ENCODE measurements at regions of chr16 and their contacts with region 1.

Region 1: DNA sequence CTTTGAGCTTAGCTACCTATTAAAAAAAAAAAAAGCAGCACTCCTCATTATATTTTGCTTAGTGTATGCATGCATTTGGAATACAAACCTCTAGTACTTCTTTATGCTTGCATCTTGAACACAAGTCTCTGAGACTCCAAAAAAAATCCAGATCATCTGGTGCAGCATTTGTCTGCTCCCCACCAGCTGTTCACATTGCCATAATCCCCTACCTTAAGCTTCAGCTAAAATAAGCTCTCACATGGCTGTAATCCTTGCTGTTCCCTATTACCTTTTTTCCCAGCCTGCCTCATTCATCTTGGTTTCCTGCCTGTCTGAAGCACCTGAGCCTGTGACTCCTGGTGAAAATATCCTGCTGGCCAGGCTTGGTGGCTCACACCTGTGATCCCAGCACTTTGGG is 7.5 kb upstream of the NFATC2IP start:
- DNase-seq: no peak
- H3K4me3 ChIP-seq: no peak overlapping the region
- H3K27ac ChIP-seq: no peak overlapping the region
- H3K4me1 ChIP-seq: peaks cover 4% of the 10 kb centered on the region
- H3K27me3 ChIP-seq: no peaks in the 10 kb centered on the region
- CTCF ChIP-seq: no peak
- POLR2A ChIP-seq: no peak

Region 2: GRCh38 chr16:28573738-28574718 is 369.3 kb before region 1 on chr16:
- CTCF ChIA-PET with region 1: no interaction called
- POLR2A ChIA-PET with region 1: no interaction called
- dilution Hi-C with region 1: no loop called
- intact Hi-C with region 1: no loop called
- DNase-seq: no peak
- H3K4me3 ChIP-seq: no peak overlapping the region
- H3K27ac ChIP-seq: no peak overlapping the region
- H3K4me1 ChIP-seq: no peaks in the 10 kb centered on the region
- H3K27me3 ChIP-seq: no peaks in the 10 kb centered on the region
- CTCF ChIP-seq: no peak
- POLR2A ChIP-seq: no peak

Region 3: GRCh38 chr16:28823872-28824716 is 119.2 kb before region 1 on chr16:
- CTCF ChIA-PET with region 1: interaction called, 4 read pairs
- POLR2A ChIA-PET with region 1: no interaction called
- dilution Hi-C with region 1: no loop called
- intact Hi-C with region 1: loop called (anchors 1 kb)
- DNase-seq: peak; percentile 99
- H3K4me3 ChIP-seq: peak overlapping the region; percentile 38 to 93 (median 77)
- H3K27ac ChIP-seq: peak overlapping the region; percentile 67
- H3K4me1 ChIP-seq: peaks cover 16% of the 10 kb centered on the region
- H3K27me3 ChIP-seq: no peaks in the 10 kb centered on the region
- CTCF ChIP-seq: peak in 1 of 2 donors; percentile 28
- POLR2A ChIP-seq: peak; percentile 75

Region 4: GRCh38 chr16:28846080-28846932 is 97.0 kb before region 1 on chr16 and contains the start of gene TUFM:
- CTCF ChIA-PET with region 1: interaction called, 20 read pairs
- POLR2A ChIA-PET with region 1: no interaction called
- dilution Hi-C with region 1: no loop called
- intact Hi-C with region 1: loop called (anchors 1 kb)
- DNase-seq: peak; percentile 99
- H3K4me3 ChIP-seq: peak within 1 kb of the TSS; percentile 54 to 84 (median 67)
- H3K27ac ChIP-seq: peak within 1 kb of the TSS; percentile 42
- H3K4me1 ChIP-seq: peaks cover 13% of the 10 kb centered on the region
- H3K27me3 ChIP-seq: no peaks in the 10 kb centered on the region
- CTCF ChIP-seq: peak; percentile 70 to 83
- POLR2A ChIP-seq: peak; percentile 87
- total RNA-seq, gene TUFM: 186 and 190 TPM in 2 replicates

Region 5: GRCh38 chr16:28863929-28864793 is 79.1 kb before region 1 on chr16:
- CTCF ChIA-PET with region 1: interaction called, 15 read pairs
- POLR2A ChIA-PET with region 1: no interaction called
- dilution Hi-C with region 1: no loop called
- intact Hi-C with region 1: loop called (anchors 1 kb)
- DNase-seq: peak; percentile 52
- H3K4me3 ChIP-seq: peak overlapping the region; percentile 46 to 90 (median 83)
- H3K27ac ChIP-seq: peak overlapping the region; percentile 96
- H3K4me1 ChIP-seq: peaks cover 8% of the 10 kb centered on the region
- H3K27me3 ChIP-seq: no peaks in the 10 kb centered on the region
- CTCF ChIP-seq: no peak
- POLR2A ChIP-seq: no peak

Region 6: DNA sequence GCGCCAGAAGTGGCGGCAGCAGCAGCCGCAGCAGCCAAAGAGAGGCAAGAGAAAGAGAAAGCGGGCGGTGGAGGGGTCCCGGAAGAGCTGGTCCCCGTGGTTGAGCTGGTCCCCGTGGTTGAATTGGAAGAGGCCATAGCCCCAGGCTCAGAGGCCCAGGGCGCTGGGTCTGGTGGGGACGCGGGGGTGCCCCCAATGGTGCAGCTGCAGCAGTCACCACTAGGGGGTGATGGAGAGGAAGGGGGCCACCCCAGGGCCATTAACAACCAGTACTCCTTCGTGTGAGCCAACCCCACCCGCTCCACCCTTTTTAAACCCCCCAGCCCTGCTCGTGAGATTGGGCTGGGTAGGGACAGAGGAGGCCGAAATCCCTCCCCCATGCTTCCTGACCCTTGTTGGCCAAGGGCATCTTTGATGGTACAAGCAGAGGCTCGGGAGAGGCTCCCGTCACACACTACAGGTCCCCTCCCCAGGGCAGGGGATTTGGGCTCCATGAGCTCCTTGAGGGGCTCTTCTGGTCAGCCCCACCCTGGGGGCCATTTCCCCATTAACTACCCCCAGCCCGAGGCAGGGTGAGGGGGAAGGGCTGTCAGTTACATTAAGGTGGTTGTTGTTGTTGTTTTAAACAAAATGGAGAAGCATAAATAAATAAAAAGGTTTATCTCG is 69.6 kb before region 1 on chr16:
- CTCF ChIA-PET with region 1: interaction called, 55 read pairs
- POLR2A ChIA-PET with region 1: no interaction called
- dilution Hi-C with region 1: no loop called
- intact Hi-C with region 1: loop called (anchors 1 kb)
- DNase-seq: no peak
- H3K4me3 ChIP-seq: no peak overlapping the region
- H3K27ac ChIP-seq: no peak overlapping the region
- H3K4me1 ChIP-seq: no peaks in the 10 kb centered on the region
- H3K27me3 ChIP-seq: no peaks in the 10 kb centered on the region
- CTCF ChIP-seq: peak; percentile 54 to 77
- POLR2A ChIP-seq: no peak

Region 7: DNA sequence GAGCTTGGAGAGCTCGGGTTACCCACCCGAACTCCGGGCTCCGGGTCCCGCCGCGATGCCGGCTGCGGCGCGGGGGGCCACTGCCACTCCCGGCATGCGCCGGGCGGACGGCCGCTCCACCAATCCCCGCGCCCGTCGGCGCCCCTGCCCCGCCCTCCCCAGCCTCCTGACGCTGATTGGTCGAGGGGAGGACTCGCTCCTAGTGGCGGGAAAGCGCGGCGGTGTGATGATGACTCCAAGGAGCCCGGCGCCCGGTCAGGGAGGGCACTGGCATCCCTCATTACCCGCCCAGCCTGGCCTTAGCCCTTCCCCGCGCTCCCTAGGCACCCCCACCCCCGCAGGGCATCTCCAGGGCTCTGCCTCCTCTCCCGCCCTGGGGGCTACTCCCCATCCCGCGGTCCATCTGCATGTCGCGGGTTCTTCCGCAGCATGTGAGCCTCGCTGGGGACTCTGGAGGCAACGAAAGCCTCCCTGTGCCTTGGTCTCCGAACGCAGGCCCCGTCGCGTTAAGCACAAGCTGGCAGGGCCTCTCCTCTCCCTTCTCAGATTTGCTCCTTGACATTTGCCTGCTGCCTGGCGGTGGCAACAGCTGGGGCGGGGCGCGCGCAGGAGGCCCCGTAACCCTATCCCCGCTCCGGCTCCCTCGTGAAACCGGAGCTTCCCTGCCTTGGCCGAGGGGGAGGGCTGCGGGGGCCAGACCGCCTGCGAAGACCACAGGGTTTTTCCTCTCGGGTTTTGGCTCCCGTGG is 63.3 kb before region 1 on chr16:
- CTCF ChIA-PET with region 1: interaction called, 55 read pairs
- POLR2A ChIA-PET with region 1: no interaction called
- dilution Hi-C with region 1: no loop called
- intact Hi-C with region 1: no loop called
- DNase-seq: peak; percentile 83
- H3K4me3 ChIP-seq: peak overlapping the region; percentile 45 to 82 (median 80)
- H3K27ac ChIP-seq: no peak overlapping the region
- H3K4me1 ChIP-seq: peaks cover 12% of the 10 kb centered on the region
- H3K27me3 ChIP-seq: no peaks in the 10 kb centered on the region
- CTCF ChIP-seq: peak in 1 of 2 donors; percentile 18
- POLR2A ChIP-seq: peak; percentile 81

Region 8: DNA sequence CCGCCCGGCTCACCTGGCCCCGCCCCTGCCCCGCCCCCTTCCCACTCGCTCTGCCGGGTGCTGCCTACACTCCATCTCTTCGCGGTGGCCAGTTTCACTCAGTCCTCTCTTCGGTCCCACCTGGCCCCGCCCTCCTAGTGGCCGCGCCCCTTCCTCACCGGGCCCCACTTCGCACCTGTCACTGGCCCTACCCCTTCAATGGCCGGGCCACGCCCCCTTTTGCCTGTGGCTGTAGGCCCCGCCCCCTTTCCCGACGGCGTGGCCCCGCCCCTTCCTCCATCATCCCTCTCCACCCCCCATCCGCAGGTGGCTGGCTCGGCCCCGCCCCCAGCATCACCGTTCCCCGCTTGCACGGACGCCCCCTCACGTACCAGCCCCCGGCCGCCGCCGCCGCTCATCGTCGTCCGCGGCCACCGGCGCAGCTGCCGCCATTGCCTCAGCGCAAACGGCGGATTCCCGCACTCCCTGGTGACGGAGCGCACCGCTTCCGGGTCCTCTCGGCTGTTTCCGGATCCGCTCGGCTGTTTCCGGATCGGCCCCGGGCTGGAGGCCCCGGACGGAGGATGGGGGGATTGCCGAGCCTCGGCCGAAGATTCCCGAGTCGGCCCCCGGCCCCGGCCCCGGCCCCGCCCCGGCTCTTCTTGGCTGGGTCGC is 18.4 kb before region 1 on chr16 and contains the start of gene RABEP2:
- CTCF ChIA-PET with region 1: interaction called, 27 read pairs
- POLR2A ChIA-PET with region 1: no interaction called
- dilution Hi-C with region 1: no loop called
- intact Hi-C with region 1: loop called (anchors 1 kb)
- DNase-seq: peak; percentile 91
- H3K4me3 ChIP-seq: peak within 1 kb of the TSS; percentile 59 to 74 (median 70)
- H3K27ac ChIP-seq: peak within 1 kb of the TSS; percentile 87
- H3K4me1 ChIP-seq: no peaks in the 10 kb centered on the region
- H3K27me3 ChIP-seq: no peaks in the 10 kb centered on the region
- CTCF ChIP-seq: no peak
- POLR2A ChIP-seq: peak; percentile 2
- total RNA-seq, gene RABEP2: 36.0 and 37.4 TPM in 2 replicates

Measured in endothelial cell of umbilical vein (primary cell).